ENCODE measurements at regions of chr6 and their contacts with region 1.

Region 1: DNA sequence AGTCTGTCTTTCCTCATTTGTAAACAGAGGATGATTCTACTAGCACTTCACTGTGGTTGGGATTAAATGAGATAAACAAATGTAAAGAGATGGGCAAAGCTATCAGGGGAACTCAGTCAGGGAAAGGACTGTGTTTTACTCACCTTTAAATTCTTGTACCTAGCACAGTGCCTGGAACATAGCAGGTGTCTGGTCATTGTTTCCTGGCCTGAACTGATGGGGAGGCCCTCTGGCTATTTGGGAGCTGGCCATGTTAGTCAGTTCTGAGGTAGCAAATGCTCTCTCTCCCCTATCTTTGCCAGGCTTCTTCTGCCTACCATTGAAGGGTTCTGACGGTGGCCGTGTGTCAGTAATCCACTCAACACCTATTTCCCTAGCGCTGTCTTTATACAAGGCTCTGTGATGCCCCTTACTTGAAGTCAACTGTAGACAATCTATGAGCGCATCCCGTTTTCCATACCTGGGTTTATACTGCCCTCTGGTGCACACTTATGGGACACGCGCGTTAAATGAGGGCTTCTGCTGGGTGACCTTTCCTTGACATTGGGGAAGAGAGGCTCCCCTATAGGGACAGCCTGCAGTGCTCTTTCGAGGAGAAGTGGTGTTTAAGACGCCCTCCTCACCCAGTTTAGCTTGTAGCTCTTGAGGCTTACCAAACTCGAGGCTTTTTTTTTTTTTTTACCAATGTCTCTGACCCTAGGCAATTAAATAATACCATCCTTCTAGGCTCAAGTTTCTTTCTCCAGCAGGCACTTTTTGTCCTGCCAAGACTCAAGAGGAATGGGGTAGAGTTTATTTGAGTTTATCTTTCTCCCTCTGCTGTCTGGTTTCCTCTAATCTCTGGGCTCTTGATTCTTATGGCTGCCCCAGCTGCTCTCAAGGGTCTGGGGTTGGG is 4.0 kb upstream of the SPATS1 start:
- DNase-seq: peak; percentile 36
- ATAC-seq: peak; percentile 94
- H3K4me3 Mint-ChIP-seq: no peak overlapping the region
- H3K27ac Mint-ChIP-seq: no peak overlapping the region
- H3K4me1 Mint-ChIP-seq: no peaks in the 10 kb centered on the region
- H3K27me3 Mint-ChIP-seq: peaks cover 22% of the 10 kb centered on the region
- CTCF ChIP-seq: peak; percentile 58

Region 2: DNA sequence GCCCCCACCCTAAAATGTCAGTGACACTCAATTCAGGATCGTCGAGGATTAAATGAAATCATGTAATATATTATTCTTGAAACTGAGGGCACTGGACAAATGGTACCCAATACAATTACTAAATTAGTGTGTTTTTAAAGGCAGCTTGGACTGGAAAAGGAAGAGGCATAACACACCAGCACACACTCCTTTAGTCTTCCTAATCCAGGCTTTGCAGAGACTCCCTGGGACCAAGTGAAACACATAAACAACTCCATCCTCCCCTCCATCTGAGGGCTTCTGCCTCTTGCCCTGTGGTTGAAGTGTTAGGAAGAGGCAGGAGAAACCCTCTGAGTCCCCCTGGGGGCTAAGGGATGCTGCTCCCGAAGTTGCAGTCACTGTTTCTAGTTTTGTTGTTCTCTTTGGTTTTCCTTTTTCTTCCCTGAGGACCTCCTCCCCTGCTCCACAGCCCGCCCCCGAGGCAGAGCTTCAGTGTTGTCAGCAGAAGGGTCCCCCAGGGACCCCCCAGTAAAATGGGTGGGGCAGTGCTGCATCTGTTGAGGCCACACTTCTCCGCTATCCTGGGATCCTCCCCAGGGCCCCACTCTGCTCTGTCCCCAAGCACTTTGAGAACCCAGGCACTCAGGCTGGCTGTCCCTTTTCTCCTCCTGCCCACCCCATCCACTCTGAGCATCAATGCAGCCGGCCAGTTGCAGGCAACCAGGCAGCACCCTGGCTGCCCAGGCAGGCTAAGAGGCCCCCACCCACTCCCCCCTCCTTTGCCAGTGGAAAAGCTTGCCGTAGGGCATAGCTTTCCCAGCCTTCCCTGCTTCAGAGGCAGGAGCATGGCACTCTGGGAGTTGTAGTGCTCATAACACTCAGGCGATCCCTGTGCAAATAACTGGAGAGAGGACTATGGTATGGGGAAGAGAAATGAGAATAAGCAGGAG is 205.2 kb before region 1 on chr6:
- CTCF ChIA-PET with region 1: no interaction called
- POLR2A ChIA-PET with region 1: no interaction called
- intact Hi-C with region 1: no loop called
- DNase-seq: no peak
- ATAC-seq: no peak
- H3K4me3 Mint-ChIP-seq: no peak overlapping the region
- H3K27ac Mint-ChIP-seq: no peak overlapping the region
- H3K4me1 Mint-ChIP-seq: peaks cover 13% of the 10 kb centered on the region
- H3K27me3 Mint-ChIP-seq: no peaks in the 10 kb centered on the region
- CTCF ChIP-seq: no peak

Region 3: GRCh38 chr6:44151348-44152108 is 186.9 kb before region 1 on chr6:
- CTCF ChIA-PET with region 1: interaction called, 5 read pairs
- POLR2A ChIA-PET with region 1: no interaction called
- intact Hi-C with region 1: loop called (anchors 1 kb)
- DNase-seq: peak; percentile 78
- ATAC-seq: peak; percentile 92
- H3K4me3 Mint-ChIP-seq: no peak overlapping the region
- H3K27ac Mint-ChIP-seq: no peak overlapping the region
- H3K4me1 Mint-ChIP-seq: peaks cover 5% of the 10 kb centered on the region
- H3K27me3 Mint-ChIP-seq: no peaks in the 10 kb centered on the region
- CTCF ChIP-seq: peak; percentile 87

Region 4: DNA sequence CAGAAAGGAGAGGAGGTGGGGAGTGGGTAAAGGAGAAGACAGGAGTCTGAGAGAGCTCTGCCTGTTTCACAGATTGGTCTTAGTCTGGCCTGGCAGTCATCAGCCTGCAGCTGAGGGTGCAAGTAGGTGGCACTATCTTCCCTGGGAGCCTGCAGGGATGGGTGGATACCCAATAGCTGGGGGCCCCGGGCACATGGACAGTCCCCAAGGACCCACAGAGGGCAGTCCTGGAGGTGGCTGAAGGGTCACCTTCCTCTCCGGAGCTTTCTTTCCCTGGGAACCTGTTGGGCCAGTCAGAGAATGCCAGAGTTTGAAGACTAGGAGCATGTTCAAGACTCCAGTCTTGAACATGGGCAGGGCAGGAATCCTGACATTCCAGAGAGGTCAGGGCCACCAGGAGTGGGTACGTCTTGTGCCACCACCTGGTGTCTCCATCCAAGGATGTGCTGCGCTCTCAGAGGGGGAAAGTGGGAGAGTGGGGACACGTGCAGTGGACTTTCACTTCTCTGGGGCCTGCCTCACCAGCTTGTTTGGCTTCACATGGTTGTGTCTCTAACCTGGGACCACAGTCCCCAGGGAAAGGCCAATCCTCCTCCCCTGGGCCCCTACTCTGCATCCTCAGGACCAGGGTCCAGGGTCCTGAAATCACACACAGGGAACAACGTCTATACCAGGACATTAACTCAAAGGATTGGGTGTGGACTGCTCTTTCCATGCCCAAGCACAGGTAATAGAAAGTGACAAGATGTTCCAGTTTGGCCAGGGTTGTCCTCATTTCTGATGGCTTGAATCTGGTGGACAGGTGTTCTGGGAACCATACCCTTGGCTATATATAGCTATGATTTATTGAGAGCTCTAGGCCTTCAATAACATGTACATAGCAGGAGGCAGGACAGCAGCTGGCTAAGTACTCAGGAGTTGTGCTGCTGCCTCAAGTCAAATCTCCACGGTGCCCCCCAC is 43.4 kb before region 1 on chr6:
- CTCF ChIA-PET with region 1: no interaction called
- POLR2A ChIA-PET with region 1: no interaction called
- intact Hi-C with region 1: no loop called
- DNase-seq: no peak
- ATAC-seq: no peak
- H3K4me3 Mint-ChIP-seq: no peak overlapping the region
- H3K27ac Mint-ChIP-seq: no peak overlapping the region
- H3K4me1 Mint-ChIP-seq: peaks cover 13% of the 10 kb centered on the region
- H3K27me3 Mint-ChIP-seq: peaks cover 52% of the 10 kb centered on the region
- CTCF ChIP-seq: no peak

Region 5: DNA sequence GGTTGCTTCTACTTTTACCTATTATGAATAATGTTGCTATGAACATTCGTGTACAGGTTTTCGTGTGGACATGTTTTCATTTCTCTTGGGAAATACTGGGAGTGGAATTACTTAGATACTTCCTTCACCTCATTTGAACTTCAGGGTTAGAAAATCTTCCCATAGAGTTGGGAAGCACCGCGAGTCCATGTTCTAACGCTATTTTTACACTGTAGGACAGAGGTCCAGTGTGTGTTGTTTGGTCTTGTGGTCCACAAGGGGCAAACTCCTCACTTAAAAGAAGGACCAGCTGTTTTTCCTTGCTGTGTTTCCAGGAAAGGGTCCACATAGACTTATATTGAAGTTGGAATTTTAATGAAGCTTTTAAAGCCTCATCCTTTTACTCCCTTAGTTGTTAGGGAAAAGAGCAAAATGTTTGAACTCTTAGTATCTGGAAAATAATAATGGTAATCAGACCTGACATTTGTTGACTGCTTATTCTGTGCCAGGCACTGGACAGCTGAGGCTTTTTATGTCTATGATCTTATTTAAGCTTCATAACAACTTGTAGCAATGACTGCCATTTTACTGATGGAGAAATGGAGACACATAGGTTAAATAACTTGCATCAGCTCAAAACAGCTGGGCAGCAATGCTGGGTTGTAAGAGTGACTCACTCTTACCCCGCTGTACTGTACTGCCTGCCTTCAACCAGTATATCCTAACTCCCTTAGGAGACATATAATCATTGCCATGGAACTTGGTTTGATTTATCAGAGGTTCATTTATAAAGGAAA is 101.0 kb after region 1 on chr6:
- CTCF ChIA-PET with region 1: no interaction called
- POLR2A ChIA-PET with region 1: no interaction called
- intact Hi-C with region 1: no loop called
- DNase-seq: no peak
- ATAC-seq: no peak
- H3K4me3 Mint-ChIP-seq: no peak overlapping the region
- H3K27ac Mint-ChIP-seq: no peak overlapping the region
- H3K4me1 Mint-ChIP-seq: peaks cover 4% of the 10 kb centered on the region
- H3K27me3 Mint-ChIP-seq: no peaks in the 10 kb centered on the region
- CTCF ChIP-seq: no peak

Region 6: DNA sequence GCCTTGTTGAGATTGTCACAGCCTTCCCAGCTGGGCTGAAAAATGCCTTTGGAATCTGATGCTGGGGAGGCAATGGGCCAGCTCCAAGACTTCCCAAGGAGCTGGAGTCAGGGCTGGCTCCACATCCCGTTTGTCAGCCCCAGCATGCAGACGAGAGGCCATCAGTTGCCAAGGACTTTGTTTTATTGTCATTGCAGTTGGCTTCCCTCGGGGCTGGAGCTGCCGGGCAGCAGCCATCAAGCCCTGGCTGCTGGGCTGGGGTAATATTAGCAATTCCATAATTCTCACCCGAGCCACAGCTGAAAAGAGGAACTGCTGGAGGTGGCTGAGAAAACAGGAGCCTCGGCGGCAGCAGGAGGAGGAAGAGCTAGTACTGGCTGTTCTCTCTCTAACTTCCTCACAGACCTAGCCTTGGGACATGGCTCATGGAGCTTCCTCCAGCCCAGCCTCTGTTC is 231.5 kb after region 1 on chr6:
- CTCF ChIA-PET with region 1: no interaction called
- POLR2A ChIA-PET with region 1: no interaction called
- intact Hi-C with region 1: no loop called
- DNase-seq: no peak
- ATAC-seq: no peak
- H3K4me3 Mint-ChIP-seq: no peak overlapping the region
- H3K27ac Mint-ChIP-seq: no peak overlapping the region
- H3K4me1 Mint-ChIP-seq: no peaks in the 10 kb centered on the region
- H3K27me3 Mint-ChIP-seq: peaks cover 7% of the 10 kb centered on the region
- CTCF ChIP-seq: no peak

Measured in activated B cell treated with CpG ODN at 0.5 μM for 24 hours (primary cell).